Vagina (tissue), 2 donors: ENCODE measurements at regions of chr7 and their contacts with region 1.

Region 1: DNA sequence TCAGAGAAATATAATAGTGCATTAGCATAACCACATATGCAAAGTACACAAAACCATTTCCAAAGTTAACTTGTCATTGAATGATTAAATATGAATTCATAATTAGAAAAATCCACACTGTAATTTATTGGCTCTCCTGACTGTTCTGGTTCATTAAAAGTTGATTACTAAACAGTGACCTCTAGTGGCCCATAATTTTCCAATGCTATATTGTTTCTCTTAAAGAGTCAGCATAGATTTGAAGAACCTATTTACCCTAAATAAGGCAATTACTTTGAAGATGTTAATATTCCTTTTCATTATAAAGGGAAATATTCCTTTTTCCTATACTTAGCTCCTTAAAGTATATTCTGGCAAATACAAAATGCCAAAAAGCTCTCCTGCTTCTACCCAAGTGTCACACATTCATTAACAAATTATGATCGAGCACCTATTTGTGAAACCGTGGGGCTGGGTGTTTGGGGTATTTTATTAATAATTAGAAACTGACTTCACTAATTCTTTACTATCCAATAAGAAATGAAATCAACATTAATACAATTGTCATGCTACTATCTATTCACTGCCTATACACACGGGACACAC is 86.2 kb downstream of the HIBADH start:
- DNase-seq: no peak
- H3K4me3 ChIP-seq: no peak overlapping the region
- H3K27ac ChIP-seq: peak overlapping the region; percentile 55
- H3K4me1 ChIP-seq: peaks cover 5% of the 10 kb centered on the region
- H3K27me3 ChIP-seq: no peaks in the 10 kb centered on the region
- CTCF ChIP-seq: peak; percentile 26 to 63 (median 44)
- POLR2A ChIP-seq: no peak

Region 2: DNA sequence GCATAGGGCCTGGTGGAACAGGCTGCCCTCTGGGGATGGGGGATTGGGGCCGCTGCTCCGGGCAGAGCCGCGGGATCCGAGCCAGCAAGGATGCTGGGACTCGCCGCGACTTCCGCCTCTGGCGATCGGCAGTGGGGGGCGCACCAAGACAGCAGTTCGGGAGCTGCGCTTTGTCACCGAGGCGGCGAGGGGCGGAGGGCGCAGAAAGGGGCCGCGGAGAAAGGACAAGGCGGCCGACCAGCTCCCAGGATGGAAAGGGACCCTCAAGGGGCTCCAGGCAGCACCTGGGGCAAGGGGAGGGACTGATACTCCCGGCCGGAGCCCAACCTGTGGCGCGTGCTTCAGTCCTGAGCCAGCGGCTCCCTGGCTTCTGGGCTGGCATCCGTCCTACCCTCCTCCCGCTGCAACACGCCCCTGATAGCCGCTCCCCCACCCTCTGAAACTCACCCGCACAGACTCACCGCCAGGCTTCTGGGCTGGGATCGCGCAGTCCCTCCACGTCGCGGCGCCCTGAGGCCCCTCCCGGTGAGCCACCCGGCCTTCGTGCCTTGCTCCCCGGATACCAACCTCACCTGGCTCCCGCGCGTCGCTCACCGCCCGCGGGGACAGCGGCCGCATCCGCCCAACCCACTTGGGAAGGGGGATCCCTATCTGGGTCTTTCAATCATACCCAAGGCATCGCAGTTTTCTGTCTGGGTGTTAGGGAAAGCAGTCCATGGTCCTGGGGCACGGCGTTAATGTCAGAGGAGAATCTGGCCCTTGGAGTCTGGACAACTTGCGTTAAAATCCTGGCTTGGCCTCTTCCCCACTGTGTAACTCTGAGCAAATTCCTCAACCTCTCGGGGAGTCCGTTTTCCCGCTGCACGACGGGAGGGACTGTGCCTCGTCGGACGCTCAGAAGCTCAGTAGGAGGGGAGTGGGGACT is 340.8 kb before region 1 on chr7:
- intact Hi-C with region 1: loop called (anchors 10 kb)
- DNase-seq: no peak
- H3K4me3 ChIP-seq: peak overlapping the region; percentile 49 to 61
- H3K27ac ChIP-seq: peak overlapping the region; percentile 37
- H3K4me1 ChIP-seq: peaks cover 19% of the 10 kb centered on the region
- H3K27me3 ChIP-seq: no peaks in the 10 kb centered on the region
- CTCF ChIP-seq: peak; percentile 14 to 60 (median 45)
- POLR2A ChIP-seq: no peak

Region 3: DNA sequence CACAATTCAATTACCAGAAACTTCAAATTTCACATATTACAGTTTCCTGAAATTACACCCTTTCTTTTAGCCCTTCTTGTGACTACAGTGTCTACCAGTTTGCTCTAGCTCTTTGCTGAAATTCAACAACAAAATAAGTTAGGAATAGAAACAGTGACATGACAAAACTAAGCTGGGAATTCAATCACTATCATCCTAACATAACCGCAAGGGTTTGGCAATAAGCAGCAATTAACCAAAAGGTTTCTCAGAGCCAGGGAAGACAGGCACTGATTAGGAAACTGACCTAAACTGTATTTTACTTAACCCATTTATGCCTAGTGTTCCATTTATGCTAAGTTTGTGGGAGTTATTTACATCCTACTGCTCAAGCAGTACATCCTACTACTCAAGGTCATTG is 54.9 kb after region 1 on chr7:
- intact Hi-C with region 1: no loop called
- DNase-seq: no peak
- H3K4me3 ChIP-seq: no peak overlapping the region
- H3K27ac ChIP-seq: no peak overlapping the region
- H3K4me1 ChIP-seq: peaks cover 6% of the 10 kb centered on the region
- H3K27me3 ChIP-seq: no peaks in the 10 kb centered on the region
- CTCF ChIP-seq: no peak
- POLR2A ChIP-seq: no peak